OCI-LY7 (cell line): ENCODE measurements at regions of chr2 and their contacts with region 1.

Region 1: DNA sequence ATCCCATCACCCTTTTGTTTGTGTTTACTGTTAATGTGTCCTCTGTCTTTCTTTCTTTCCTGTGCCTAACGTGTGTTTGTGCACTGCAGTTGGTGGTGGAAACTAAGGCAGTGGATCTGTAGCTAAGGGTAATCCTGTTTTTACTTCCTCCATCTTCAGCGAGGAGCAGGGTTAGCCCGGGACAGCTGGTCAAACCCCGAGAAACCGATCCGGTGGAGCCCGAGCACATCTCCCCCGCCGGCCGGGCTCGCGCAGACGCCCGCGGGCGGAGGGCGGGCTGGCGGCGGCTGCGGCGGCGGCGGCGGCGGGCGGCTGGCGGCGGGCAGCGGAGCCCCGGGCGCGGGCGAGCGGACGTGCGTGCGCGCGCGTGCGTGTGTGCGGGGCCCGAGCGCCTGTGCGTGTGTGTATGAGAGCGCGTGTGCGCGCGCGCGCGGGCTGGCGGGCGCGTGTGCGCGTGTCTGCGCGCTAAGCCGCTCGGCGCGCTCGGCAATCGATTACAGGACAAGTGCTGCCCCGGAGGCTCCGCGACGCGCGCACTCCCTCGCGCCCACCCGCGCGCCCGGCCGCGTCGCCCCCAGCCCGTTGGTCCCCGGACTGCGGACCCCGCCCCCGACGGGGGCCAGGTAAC is at the start of gene IKZF2:
- DNase-seq: peak; percentile 95
- H3K4me3 ChIP-seq: peak within 1 kb of the TSS; percentile 86
- H3K27ac ChIP-seq: peak within 1 kb of the TSS; percentile 92
- H3K4me1 ChIP-seq: peaks cover 50% of the 10 kb centered on the region
- CTCF ChIP-seq: no peak; the same call in 1 of the 2 replicates
- total RNA-seq, gene IKZF2: 45.1 and 54.6 TPM in 2 replicates

Region 2: DNA sequence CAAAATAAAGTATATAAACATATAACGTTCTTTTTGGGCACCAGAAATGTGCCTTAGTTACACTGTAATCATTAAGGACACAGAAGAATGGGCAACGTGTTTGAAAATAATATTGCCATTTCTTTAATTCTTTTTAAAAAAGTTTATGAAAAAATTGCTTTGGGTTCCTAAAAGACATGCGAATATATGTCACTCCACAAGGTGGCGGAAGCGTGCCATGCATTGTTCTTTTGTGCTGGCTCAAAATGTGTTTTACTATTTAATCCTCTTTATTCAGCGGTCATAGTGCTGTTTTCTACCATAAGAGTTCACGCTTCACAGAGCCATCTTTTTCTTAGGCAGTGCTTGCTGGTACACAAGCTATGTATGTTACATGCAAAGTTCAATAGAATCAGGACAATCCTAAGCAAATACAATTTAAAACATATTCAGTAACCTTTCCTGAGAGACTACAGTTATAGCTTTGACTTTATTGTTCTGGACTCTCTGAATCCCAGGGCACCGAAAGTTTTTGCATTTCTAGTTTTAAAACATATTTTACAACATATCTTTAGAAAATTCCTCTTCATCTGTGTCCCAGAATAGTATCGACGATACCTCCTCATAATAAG is 465.2 kb before region 1 on chr2:
- CTCF ChIA-PET with region 1: interaction called, 3 read pairs
- POLR2A ChIA-PET with region 1: interaction called, 3 read pairs
- intact Hi-C with region 1: loop called (anchors 1 kb)
- DNase-seq: peak; percentile 73
- H3K4me3 ChIP-seq: no peak overlapping the region
- H3K27ac ChIP-seq: no peak overlapping the region
- H3K4me1 ChIP-seq: peaks cover 5% of the 10 kb centered on the region
- CTCF ChIP-seq: peak; percentile 98

Region 3: DNA sequence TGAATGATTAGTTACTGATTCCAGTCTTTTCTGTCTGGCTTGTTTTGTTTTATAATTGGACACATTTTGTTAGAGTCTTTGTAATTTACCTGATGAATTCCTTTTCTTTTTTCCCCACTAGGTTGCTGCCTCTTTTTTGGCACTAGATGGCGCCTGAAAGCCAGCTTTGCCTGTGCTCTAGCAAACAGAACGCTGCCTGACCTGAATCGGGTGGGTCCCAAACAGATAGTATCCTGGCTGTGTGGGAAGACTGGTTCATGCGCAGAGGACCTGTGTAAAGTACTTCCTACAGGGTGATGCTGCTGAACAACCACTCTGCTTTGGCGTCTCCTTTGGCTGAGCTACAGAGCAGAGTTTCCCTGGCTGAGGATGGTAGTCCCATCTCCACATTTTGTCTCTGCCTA is 288.4 kb before region 1 on chr2:
- CTCF ChIA-PET with region 1: interaction called, 4 read pairs
- POLR2A ChIA-PET with region 1: interaction called, 11 read pairs
- intact Hi-C with region 1: loop called (anchors 1 kb)
- DNase-seq: peak; percentile 84
- H3K4me3 ChIP-seq: no peak overlapping the region
- H3K27ac ChIP-seq: no peak overlapping the region
- H3K4me1 ChIP-seq: no peaks in the 10 kb centered on the region
- CTCF ChIP-seq: peak; percentile 98

Region 4: GRCh38 chr2:213125646-213126347 is 25.8 kb before region 1 on chr2:
- CTCF ChIA-PET with region 1: no interaction called
- POLR2A ChIA-PET with region 1: interaction called, 18 read pairs
- intact Hi-C with region 1: no loop called
- DNase-seq: no peak
- H3K4me3 ChIP-seq: no peak overlapping the region
- H3K27ac ChIP-seq: no peak overlapping the region
- H3K4me1 ChIP-seq: no peaks in the 10 kb centered on the region
- CTCF ChIP-seq: no peak

Region 5: GRCh38 chr2:213232649-213233437 is 81.3 kb after region 1 on chr2:
- CTCF ChIA-PET with region 1: no interaction called
- POLR2A ChIA-PET with region 1: interaction called, 6 read pairs
- intact Hi-C with region 1: loop called (anchors 1 kb)
- DNase-seq: peak; percentile 99
- H3K4me3 ChIP-seq: peak overlapping the region; percentile 56
- H3K27ac ChIP-seq: peak overlapping the region; percentile 97
- H3K4me1 ChIP-seq: peaks cover 98% of the 10 kb centered on the region
- CTCF ChIP-seq: no peak

Region 6: GRCh38 chr2:213284105-213285090 is 132.8 kb after region 1 on chr2 and contains the start of gene SPAG16:
- CTCF ChIA-PET with region 1: no interaction called
- POLR2A ChIA-PET with region 1: interaction called, 10 read pairs
- intact Hi-C with region 1: no loop called
- DNase-seq: peak; percentile 99
- H3K4me3 ChIP-seq: peak within 1 kb of the TSS; percentile 85
- H3K27ac ChIP-seq: peak within 1 kb of the TSS; percentile 27
- H3K4me1 ChIP-seq: peaks cover 23% of the 10 kb centered on the region
- CTCF ChIP-seq: no peak; the same call in 1 of the 2 replicates
- total RNA-seq, gene SPAG16: 16.6 and 24.2 TPM in 2 replicates

Region 7: DNA sequence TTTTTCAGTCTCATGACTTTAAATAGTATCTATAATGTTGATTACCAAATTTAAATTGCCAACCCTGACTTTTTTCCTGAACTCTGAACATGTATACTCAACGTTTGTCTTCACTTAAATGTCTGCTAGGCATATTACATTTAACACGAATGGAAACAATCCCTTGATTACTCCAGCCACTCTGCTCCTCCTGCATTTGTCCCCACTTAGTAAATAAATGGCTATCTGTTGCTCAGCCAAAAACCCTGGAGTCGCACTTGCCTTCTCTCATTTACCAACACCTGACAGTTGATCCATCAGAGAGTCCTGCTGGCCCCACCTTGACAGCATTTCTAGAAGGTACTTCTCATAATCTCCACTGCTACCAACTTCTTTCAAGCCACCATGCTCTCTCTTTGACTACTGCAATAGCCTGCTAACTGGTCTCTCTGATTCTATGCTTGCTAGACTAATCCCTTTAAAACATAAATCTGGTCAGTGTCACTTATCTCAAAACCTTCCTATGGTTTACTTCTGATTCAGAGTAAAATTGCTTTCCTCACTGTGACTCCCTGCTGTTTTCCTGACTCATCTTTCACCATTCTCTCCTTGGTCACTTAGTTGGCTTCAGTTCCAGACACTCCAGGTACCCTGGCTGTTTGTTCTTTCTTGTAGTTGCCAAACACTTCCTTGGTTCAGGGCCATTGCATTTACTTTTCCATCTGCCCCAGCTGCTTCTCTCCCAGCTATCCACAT is 164.6 kb after region 1 on chr2:
- CTCF ChIA-PET with region 1: no interaction called
- POLR2A ChIA-PET with region 1: no interaction called
- intact Hi-C with region 1: no loop called
- DNase-seq: no peak
- H3K4me3 ChIP-seq: no peak overlapping the region
- H3K27ac ChIP-seq: no peak overlapping the region
- H3K4me1 ChIP-seq: no peaks in the 10 kb centered on the region
- CTCF ChIP-seq: no peak

Region 8: GRCh38 chr2:214577769-214578168 is 1426.2 kb after region 1 on chr2:
- CTCF ChIA-PET with region 1: no interaction called
- POLR2A ChIA-PET with region 1: no interaction called
- intact Hi-C with region 1: no loop called
- DNase-seq: no peak
- H3K4me3 ChIP-seq: no peak overlapping the region
- H3K27ac ChIP-seq: no peak overlapping the region
- H3K4me1 ChIP-seq: no peaks in the 10 kb centered on the region
- CTCF ChIP-seq: no peak